Heart right ventricle (tissue), 16 donors: ENCODE measurements at regions of chr16 and their contacts with region 1.

Region 1: DNA sequence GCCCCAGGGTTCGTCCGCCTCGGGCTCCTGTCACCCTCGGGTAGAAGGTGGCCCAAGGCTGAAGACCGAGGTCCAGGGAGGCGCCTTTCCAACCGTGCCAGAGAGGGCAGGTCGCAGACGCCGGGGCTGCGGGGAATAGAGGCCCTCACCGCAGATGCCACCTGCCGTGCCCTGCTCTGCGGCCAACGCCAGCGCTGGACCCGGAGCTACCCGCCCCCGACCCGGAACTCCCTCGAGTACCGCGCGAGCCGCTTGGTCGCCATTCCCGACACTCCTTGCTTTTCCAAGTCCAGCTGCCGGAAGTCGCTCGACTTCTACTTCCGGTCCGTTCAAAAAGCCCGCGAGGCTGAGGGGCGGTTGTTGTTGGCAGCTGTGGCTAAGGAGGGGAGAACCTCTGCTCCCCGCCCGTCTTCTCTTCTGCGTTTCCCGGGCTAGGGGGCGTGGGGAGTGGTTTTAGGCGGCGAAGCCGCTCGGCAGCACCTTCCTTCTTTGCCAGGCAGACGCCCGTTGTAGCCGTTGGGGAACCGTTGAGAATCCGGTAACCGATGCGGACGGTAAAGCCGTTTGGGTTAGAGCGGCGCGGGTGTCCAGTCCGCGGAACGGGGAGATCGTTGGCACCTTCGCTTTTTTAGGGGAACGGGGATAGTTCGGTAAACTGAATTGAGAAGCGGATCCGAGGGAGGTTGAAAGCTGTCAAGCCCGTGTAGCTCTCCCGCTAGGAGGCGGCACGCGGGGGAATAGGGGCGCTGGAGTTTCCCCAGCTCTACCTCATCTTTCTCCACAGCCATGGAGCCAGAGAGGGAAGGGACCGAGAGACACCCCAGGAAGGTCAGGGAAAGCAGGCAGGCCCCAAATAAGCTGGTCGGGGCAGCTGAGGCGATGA is at the starts of genes ERI2 and REXO5:
- DNase-seq: peak; percentile 90 to 92
- ATAC-seq: peak; percentile 94 to 97 (median 96)
- H3K4me3 ChIP-seq: peak within 1 kb of the TSS; percentile 73 to 95 (median 88)
- H3K27ac ChIP-seq: peak within 1 kb of the TSS; percentile 89 to 97 (median 95)
- H3K4me1 ChIP-seq: peaks cover 0 to 32% (median 17%) of the 10 kb centered on the region in 9 donors
- H3K27me3 ChIP-seq: no peaks in the 10 kb centered on the region
- CTCF ChIP-seq: peak in 7 of 9 donors; percentile 32 to 64 (median 51)
- total RNA-seq, gene ERI2: 8.1 to 13.6 (median 12.0) TPM
- total RNA-seq, gene REXO5: 3.1 to 6.9 (median 5.2) TPM

Region 2: GRCh38 chr16:20900299-20901067 is 94.1 kb after region 1 on chr16 and contains the starts of genes DCUN1D3 and LYRM1:
- intact Hi-C with region 1: loop called in 1 of 10 experiments (anchors 5 kb)
- DNase-seq: peak; percentile 96 to 97
- ATAC-seq: peak; percentile 91 to 96 (median 94)
- H3K4me3 ChIP-seq: peak within 1 kb of the TSS; percentile 62 to 86 (median 76)
- H3K27ac ChIP-seq: peak within 1 kb of the TSS; percentile 95 to 99 (median 98)
- H3K4me1 ChIP-seq: peaks cover 5 to 79% (median 67%) of the 10 kb centered on the region in 9 donors
- H3K27me3 ChIP-seq: no peaks in the 10 kb centered on the region
- CTCF ChIP-seq: no peak
- total RNA-seq, gene DCUN1D3: 7.8 to 32.6 (median 11.2) TPM
- total RNA-seq, gene LYRM1: 37.4 to 69.1 (median 48.9) TPM

Region 3: DNA sequence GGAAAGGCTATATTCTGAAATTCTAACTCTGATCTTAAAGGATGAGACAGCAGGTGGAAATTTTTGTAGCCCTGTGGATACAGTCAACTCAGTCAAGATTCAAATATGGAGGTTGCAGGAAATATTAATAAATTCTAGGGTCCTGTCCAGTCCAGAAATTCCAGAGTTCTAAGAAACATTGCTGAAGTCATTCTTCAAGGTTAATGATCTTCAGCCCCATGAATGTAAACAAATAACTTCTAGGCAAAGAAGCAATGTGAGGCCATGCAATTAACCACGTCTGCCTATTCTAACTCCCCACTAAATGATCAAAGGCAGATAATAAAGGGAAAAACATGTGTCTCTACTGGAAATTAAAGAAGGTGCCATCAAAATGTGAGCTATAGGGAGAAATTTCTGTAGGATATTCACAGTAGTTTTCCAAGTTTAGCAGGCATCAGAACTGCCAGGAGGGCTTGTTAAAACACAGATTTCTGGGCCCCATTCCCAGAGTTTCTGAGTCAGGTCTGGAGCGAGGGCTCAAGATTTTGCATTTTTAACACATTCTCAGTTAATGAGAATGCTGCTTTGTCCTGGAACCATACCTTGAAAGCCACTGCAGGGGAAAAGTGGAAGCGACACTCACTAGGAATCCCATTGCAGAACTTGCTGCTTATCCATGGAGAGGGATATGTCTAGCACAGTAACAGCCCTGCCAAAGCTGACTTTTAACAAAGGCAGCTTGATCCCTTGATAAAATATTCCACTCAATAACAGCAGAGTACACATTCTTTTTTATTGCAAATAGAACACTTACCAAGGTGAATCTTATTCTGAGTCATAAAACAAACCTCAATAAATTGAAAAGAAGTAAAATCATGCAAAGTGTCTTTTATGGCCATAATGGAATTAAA is 282.5 kb after region 1 on chr16:
- intact Hi-C with region 1: loop called in 1 of 10 experiments (anchors 5 kb)
- DNase-seq: no peak
- ATAC-seq: no peak
- H3K4me3 ChIP-seq: no peak overlapping the region
- H3K27ac ChIP-seq: no peak overlapping the region
- H3K4me1 ChIP-seq: no peaks in the 10 kb centered on the region
- H3K27me3 ChIP-seq: no peaks in the 10 kb centered on the region
- CTCF ChIP-seq: no peak

Region 4: DNA sequence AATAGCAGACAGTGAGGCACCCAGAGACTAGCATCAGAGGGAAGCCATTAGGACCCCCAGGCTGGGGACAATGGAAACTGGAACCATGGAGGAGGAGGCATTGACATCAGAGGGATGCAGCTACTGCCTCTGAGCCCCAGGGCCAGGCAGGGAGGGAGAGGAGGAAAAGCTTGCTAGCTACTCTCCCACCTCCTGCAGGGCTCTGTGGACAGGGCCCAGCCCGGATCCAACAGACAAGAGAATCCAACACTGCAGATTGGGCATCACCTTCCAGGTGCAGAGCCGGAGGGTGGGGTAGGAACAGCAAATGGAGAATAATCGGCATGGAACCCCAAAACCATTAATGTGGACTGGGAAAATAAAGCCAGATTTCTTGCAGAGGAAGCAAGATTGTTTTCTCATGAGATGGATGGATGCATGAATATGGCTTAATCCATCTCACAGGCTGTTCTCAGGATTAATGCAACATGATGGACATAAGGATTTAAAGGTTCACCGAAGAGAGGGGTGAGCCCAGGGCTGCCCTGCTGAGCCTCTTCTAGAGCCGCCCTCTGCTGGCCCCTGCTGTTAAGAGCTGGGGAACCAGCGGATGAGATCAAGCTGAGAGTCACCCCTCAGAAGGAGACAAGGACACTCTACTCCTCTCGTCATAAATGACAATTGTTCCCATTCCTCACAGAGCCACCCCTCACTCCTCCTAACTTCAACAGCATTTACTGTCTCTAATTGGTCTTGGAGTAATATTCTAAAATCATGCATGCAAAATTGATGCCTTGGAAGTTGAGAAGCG is 295.4 kb after region 1 on chr16:
- intact Hi-C with region 1: loop called in 1 of 10 experiments (anchors 5 kb)
- DNase-seq: peak in 1 of 2 donors; percentile 36
- ATAC-seq: peak in 6 of 8 donors; percentile 42 to 86 (median 62)
- H3K4me3 ChIP-seq: no peak overlapping the region
- H3K27ac ChIP-seq: no peak overlapping the region
- H3K4me1 ChIP-seq: peaks cover 0 to 15% (median 0%) of the 10 kb centered on the region in 9 donors
- H3K27me3 ChIP-seq: no peaks in the 10 kb centered on the region
- CTCF ChIP-seq: peak in 8 of 9 donors; percentile 5 to 62 (median 46)